ENCODE measurements at regions of chr5 and their contacts with region 1.

Region 1: DNA sequence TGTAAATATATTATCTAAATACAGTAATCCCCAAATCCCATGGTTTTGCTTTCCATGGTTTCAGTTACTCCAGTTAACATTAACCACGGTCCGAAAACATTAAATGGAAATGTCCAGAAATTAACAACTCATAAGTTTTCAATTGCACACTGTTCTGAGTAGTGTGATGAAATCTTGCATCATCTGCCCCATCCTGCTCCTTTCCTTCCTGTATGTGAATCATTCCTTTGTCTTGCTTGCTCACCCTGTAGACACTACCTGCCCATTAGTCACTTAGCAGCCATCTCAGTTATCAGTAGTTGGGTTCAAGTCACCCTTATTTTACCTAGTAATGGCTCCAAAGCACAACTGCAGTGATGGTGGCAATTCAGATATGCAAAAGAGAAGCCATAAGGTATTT is 1568.5 kb upstream of the WWC1 start:
- DNase-seq: no peak
- H3K4me3 ChIP-seq: no peak overlapping the region
- H3K27ac ChIP-seq: no peak overlapping the region
- H3K4me1 ChIP-seq: no peaks in the 10 kb centered on the region
- H3K27me3 ChIP-seq: no peaks in the 10 kb centered on the region
- CTCF ChIP-seq: no peak
- POLR2A ChIP-seq: no peak

Region 2: DNA sequence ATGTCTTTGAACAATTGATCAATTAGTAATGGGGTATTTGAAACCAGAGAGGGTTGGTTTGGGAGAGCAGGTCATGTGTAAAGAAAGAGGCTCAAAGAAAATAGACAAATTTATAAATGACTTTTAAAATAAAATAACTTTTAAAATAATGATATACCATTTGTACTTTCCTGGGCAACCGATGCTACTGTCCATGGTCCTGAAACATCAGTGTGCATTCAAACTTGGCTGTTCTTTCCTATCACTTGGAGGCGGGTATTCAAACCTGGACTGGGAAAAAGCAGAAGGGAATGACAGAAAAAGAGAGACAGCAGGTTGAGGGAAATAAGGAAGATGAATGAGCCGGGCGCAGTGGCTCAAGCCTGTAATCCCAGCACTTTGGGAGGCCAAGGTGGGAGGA is 122.1 kb after region 1 on chr5:
- intact Hi-C with region 1: loop called (anchors 5 kb)
- DNase-seq: no peak
- H3K4me3 ChIP-seq: no peak overlapping the region
- H3K27ac ChIP-seq: no peak overlapping the region
- H3K4me1 ChIP-seq: no peaks in the 10 kb centered on the region
- H3K27me3 ChIP-seq: no peaks in the 10 kb centered on the region
- CTCF ChIP-seq: no peak
- POLR2A ChIP-seq: no peak